IMR-90 (cell line): ENCODE measurements at regions of chr19 and their contacts with region 1.

Region 1: GRCh38 chr19:47256688-47257443 is 541 bp downstream of the CCDC9 start:
- DNase-seq: peak; percentile 98
- ATAC-seq: peak; percentile 84
- H3K4me3 ChIP-seq: peak overlapping the region; percentile 59
- H3K27ac ChIP-seq: peak overlapping the region; percentile 92
- H3K4me1 ChIP-seq: peaks cover 20% of the 10 kb centered on the region
- H3K27me3 ChIP-seq: no peaks in the 10 kb centered on the region
- CTCF ChIP-seq: no peak
- POLR2A ChIP-seq: no peak
- RAD21 ChIP-seq: no peak

Region 2: GRCh38 chr19:47273313-47273977 is 16.6 kb after region 1 on chr19:
- CTCF ChIA-PET with region 1: interaction called, 3 read pairs
- POLR2A ChIA-PET with region 1: interaction called, 4 read pairs
- dilution Hi-C with region 1: no loop called
- in situ Hi-C with region 1: no loop called
- intact Hi-C with region 1: loop called (anchors 1 kb)
- DNase-seq: peak; percentile 90
- ATAC-seq: peak; percentile 74
- H3K4me3 ChIP-seq: peak overlapping the region; percentile 58
- H3K27ac ChIP-seq: peak overlapping the region; percentile 94
- H3K4me1 ChIP-seq: peaks cover 14% of the 10 kb centered on the region
- H3K27me3 ChIP-seq: no peaks in the 10 kb centered on the region
- CTCF ChIP-seq: 0 out of 2 replicates have a peak, but pooled peaks have one; percentile 16
- POLR2A ChIP-seq: peak; percentile 84
- RAD21 ChIP-seq: no peak

Region 3: GRCh38 chr19:47370045-47370611 is 113.3 kb after region 1 on chr19:
- CTCF ChIA-PET with region 1: no interaction called
- POLR2A ChIA-PET with region 1: no interaction called
- dilution Hi-C with region 1: no loop called
- in situ Hi-C with region 1: no loop called
- intact Hi-C with region 1: no loop called
- DNase-seq: peak; percentile 74
- ATAC-seq: peak; percentile 99
- H3K4me3 ChIP-seq: no peak overlapping the region
- H3K27ac ChIP-seq: peak overlapping the region; percentile 10
- H3K4me1 ChIP-seq: peaks cover 6% of the 10 kb centered on the region
- H3K27me3 ChIP-seq: no peaks in the 10 kb centered on the region
- CTCF ChIP-seq: no peak
- POLR2A ChIP-seq: no peak
- RAD21 ChIP-seq: no peak